Psoas muscle (tissue), 8 donors: ENCODE measurements at regions of chr9 and their contacts with region 1.

Region 1: DNA sequence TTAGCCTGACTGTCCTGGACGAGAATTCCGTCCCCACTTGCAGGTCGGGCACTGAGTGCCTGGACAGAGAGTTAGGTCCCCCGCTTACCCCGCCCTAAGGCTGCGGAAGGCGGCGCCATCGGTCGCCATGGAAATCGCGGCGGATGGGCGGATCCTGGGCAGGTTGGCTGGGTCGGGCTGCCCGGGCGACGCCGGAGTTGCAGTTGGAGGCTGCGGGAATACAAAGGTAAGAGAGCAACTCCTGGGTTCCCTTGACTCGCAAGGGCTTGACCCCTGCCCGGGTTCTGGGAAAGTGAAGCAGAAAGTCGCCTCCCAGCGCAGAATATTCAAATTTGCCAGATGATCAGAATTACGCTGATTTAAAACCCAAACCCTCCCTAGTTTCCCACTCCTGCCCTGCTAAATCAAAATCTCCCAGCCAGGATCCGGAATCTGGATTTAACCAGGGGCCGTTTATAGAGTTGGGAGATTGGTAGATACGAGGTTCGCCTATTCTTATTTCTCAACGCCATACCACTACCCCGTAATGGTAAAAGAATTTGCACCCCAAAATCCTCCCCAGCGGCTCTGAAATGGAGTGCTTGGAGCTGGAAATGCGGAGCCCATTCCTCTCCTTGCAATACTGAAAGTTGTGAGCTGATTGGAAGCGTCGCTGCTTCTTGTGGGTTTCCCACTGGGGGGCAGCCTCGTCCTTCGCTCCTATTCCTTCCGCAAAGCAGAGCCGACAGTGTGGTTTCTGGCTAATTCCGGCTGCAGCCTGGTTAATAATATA is 156.4 kb upstream of the RASEF start:
- DNase-seq: peak; percentile 66 to 86
- ATAC-seq: peak; percentile 93 to 99 (median 96)
- H3K4me3 ChIP-seq: peak overlapping the region; percentile 73
- H3K27ac ChIP-seq: peak overlapping the region; percentile 44
- H3K4me1 ChIP-seq: peaks cover 2% of the 10 kb centered on the region
- H3K27me3 ChIP-seq: no peaks in the 10 kb centered on the region
- CTCF ChIP-seq: peak; percentile 35

Region 2: DNA sequence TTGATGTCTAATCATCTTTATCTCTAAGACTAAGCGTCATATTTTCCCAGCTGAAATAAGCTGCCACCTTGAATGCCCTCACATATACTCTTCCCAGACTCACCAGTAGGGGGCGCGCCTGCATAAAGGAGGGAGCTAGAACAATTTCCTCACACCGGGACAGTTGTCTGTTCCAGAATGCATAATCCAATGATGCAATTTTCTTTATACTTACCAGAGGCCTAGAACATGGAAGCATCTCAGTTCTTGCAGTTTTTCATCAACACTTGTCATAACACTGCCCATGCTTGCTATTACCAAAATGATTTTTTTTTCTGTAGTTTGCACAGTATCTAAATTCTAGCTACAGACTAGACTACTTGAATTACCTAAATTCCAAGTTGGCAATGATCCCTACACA is 115.0 kb after region 1 on chr9:
- intact Hi-C with region 1: loop called (anchors 5 kb)
- DNase-seq: peak; percentile 84 to 91
- ATAC-seq: peak; percentile 93 to 98 (median 97)
- H3K4me3 ChIP-seq: no peak overlapping the region
- H3K27ac ChIP-seq: no peak overlapping the region
- H3K4me1 ChIP-seq: no peaks in the 10 kb centered on the region
- H3K27me3 ChIP-seq: no peaks in the 10 kb centered on the region
- CTCF ChIP-seq: peak; percentile 94

Region 3: DNA sequence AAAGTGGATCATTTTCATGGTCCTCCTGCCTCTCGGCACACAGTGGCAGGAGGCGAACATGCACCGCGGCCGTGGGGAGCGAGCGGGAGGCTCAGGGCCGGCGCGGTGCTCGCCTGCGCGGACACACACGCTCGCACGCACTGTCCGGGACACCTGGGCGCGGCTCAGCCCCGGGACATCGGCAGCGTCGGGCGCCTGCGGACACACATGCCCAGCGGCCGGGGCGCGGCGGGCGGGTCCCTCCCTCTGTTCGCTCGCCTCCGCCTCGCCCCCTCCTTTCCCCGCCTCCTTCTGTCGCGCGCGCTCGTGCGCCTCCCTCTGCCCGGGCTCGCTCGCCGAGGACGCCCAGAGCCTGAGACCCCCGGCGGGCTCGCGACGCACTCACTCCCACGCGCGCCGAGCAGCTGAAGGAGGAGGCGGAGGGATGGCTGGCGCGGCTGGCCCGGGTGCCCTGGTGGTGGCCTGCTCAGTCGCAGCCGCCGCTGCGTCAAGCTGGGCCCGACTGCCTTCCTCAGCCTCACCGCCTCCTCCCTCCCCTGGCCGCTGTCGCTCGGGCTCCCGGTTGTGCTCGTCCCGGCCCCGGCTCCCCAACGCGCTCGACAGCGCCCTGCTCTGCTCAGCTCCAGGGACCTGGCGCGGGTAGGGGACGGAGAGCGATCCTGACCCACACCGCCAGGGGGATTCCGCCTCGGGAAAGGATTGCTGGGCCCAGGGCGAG is 319.0 kb after region 1 on chr9 and contains the start of gene FRMD3:
- intact Hi-C with region 1: loop called (anchors 5 kb)
- DNase-seq: peak; percentile 78 to 91
- ATAC-seq: peak; percentile 88 to 96 (median 92)
- H3K4me3 ChIP-seq: peak within 1 kb of the TSS; percentile 85
- H3K27ac ChIP-seq: peak within 1 kb of the TSS; percentile 64
- H3K4me1 ChIP-seq: peaks cover 16% of the 10 kb centered on the region
- H3K27me3 ChIP-seq: peaks cover 0 to 10% (median 0%) of the 10 kb centered on the region in 3 donors
- CTCF ChIP-seq: peak; percentile 64
- total RNA-seq, gene FRMD3: 27.5 to 41.0 (median 37.8) TPM

Region 4: DNA sequence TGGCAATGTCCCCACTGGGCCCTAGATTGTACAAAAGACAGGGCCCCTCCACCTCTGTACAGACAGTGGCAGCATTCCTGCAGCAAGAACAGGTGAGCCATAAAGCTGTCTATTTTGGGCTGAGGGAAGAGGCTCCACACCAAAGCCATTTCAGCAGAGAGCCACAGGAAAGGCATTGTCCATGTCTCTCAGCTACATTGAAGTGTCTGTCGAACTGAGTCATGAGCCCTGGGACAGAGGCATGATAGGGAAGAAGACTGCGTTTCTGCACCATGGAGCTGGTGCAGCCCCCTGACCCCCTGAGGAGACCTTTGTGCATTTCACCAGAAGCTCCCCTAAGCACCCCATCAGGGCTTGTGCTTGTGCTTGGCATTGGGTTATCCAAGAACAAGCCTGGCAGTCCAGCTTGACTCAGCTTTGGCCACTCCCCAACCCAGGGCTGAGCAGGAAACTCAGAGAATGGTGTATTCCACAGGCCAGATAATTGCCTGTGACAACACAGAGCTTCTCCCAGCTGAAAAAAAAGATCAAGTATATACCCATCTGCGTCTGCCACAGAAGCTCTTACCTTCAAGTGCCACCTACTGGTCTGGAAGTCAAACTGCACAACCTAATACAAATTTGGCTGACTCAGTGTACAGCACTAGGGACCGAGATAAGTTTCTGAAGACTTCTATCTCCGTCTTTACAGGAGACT is 324.8 kb after region 1 on chr9:
- intact Hi-C with region 1: loop called (anchors 5 kb)
- DNase-seq: peak; percentile 19 to 58
- ATAC-seq: peak; percentile 69 to 93 (median 82)
- H3K4me3 ChIP-seq: no peak overlapping the region
- H3K27ac ChIP-seq: no peak overlapping the region
- H3K4me1 ChIP-seq: peaks cover 1% of the 10 kb centered on the region
- H3K27me3 ChIP-seq: no peaks in the 10 kb centered on the region
- CTCF ChIP-seq: peak; percentile 65

Region 5: DNA sequence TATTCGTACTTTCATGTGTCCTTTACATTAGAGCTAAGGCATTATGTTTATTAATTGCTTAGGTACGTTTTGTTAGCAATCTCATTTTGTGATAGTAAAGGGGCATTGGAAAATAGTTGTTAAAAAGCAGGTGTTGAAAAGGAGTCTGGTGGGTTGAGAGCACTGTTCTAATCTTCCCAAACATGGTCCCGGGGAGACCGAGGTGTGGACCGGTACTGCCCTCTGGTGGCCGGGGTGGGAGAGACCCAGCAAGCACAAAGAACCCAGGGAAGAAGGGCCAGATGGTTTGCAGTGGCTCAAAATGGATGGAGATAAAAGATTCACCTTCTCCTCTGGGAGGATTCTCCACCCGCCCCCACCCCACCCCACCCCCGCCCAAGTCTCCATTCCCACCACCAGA is 429.7 kb after region 1 on chr9:
- intact Hi-C with region 1: loop called in 1 of 2 experiments (anchors 10 kb)
- DNase-seq: peak; percentile 64 to 86
- ATAC-seq: peak; percentile 78 to 86 (median 80)
- H3K4me3 ChIP-seq: no peak overlapping the region
- H3K27ac ChIP-seq: no peak overlapping the region
- H3K4me1 ChIP-seq: no peaks in the 10 kb centered on the region
- H3K27me3 ChIP-seq: no peaks in the 10 kb centered on the region
- CTCF ChIP-seq: peak; percentile 67